ENCODE measurements at regions of chr12 and their contacts with region 1.

Region 1: GRCh38 chr12:29889737-29890136 is 106.0 kb upstream of the TMTC1 start:
- H3K4me3 ChIP-seq: no peak overlapping the region
- H3K27ac ChIP-seq: no peak overlapping the region
- H3K4me1 ChIP-seq: no peaks in the 10 kb centered on the region
- CTCF ChIP-seq: no peak; the same call in 1 of the 2 replicates

Region 2: GRCh38 chr12:29858270-29858786 is 31.4 kb before region 1 on chr12:
- CTCF ChIA-PET with region 1: no interaction called
- POLR2A ChIA-PET with region 1: no interaction called
- H3K4me3 ChIP-seq: no peak overlapping the region
- H3K27ac ChIP-seq: no peak overlapping the region
- H3K4me1 ChIP-seq: no peaks in the 10 kb centered on the region
- CTCF ChIP-seq: no peak

Region 3: GRCh38 chr12:29869946-29870345 is 19.8 kb before region 1 on chr12:
- CTCF ChIA-PET with region 1: interaction called, 12 read pairs
- POLR2A ChIA-PET with region 1: no interaction called
- H3K4me3 ChIP-seq: no peak overlapping the region
- H3K27ac ChIP-seq: no peak overlapping the region
- H3K4me1 ChIP-seq: 0 out of 2 replicates have a peak, but pooled peaks cover 5% of the 10 kb centered on the region
- CTCF ChIP-seq: no peak

Region 4: GRCh38 chr12:29901585-29901984 is 11.8 kb after region 1 on chr12:
- CTCF ChIA-PET with region 1: interaction called, 14 read pairs
- POLR2A ChIA-PET with region 1: no interaction called
- H3K4me3 ChIP-seq: no peak overlapping the region
- H3K27ac ChIP-seq: no peak overlapping the region
- H3K4me1 ChIP-seq: no peaks in the 10 kb centered on the region
- CTCF ChIP-seq: no peak

Region 5: GRCh38 chr12:29929295-29929694 is 39.6 kb after region 1 on chr12:
- CTCF ChIA-PET with region 1: no interaction called
- POLR2A ChIA-PET with region 1: no interaction called
- H3K4me3 ChIP-seq: no peak overlapping the region
- H3K27ac ChIP-seq: no peak overlapping the region
- H3K4me1 ChIP-seq: no peaks in the 10 kb centered on the region
- CTCF ChIP-seq: no peak

Region 6: GRCh38 chr12:30484658-30485057 is 594.9 kb after region 1 on chr12:
- CTCF ChIA-PET with region 1: no interaction called
- POLR2A ChIA-PET with region 1: no interaction called
- H3K4me3 ChIP-seq: no peak overlapping the region
- H3K27ac ChIP-seq: no peak overlapping the region
- H3K4me1 ChIP-seq: no peaks in the 10 kb centered on the region
- CTCF ChIP-seq: no peak

Measured in HEK293 (cell line).